Activated T-helper 1 cell treated with anti-CD3 and anti-CD28 coated beads, Interleukin-12 subunit alpha, Interleukin-12 subunit beta, Interleukin-2, Interleukin-4 antibody, amounts not matched to agents 30 ng/mL and 10 ng/mL and 1 ng/mL, durations not matched to agents 14 hours and 24 hours and 36 hours (primary cell): ENCODE measurements at regions of chr20 and their contacts with region 1.

Region 1: DNA sequence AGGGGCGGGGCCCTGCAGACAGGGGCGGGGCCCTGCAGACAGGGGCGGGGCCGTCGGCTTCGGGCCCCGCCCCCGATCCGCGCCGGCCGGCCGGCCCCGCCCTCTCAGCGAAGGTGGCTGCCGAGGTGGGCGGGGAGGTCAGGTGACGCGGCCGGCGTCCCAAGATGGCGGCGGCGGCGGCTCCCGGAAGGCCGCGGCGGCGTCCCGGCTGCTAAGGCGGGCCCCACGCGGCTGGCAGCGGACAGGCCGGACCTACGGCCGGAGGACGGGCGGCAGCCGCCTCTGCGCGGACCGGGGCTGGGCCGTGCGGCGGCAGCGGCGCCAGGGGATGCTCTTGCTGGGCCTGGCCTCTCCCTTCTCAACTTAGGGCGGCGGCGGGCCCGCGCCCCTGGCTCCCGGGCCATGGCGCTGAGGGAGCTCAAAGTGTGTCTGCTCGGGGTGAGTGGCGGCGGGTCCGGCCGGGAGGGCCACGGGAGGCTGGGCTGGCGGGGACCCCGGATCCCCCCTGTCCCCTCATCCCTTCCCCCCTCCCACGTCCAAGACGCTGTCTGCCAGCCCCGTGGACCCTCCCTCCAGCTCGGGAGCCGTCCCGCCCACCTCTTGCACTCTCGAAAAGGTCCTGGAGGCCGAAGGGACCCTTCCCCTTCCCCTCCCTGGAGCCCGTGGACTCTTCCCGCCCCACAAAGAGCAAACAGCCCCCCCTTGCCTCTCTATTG is at the start of gene RAB22A:
- DNase-seq: peak; percentile 79
- H3K4me3 Mint-ChIP-seq: peak within 1 kb of the TSS; percentile 95
- H3K27ac Mint-ChIP-seq: peak within 1 kb of the TSS; percentile 94
- H3K4me1 Mint-ChIP-seq: peaks cover 63% of the 10 kb centered on the region
- H3K27me3 Mint-ChIP-seq: no peaks in the 10 kb centered on the region
- total RNA-seq, gene RAB22A: 16.9 and 19.2 TPM in 2 replicates

Region 2: GRCh38 chr20:57391074-57391554 is 918.6 kb before region 1 on chr20 and contains the start of gene RBM38:
- intact Hi-C with region 1: loop called (anchors 2 kb)
- DNase-seq: peak; percentile 69
- H3K4me3 Mint-ChIP-seq: peak within 1 kb of the TSS; percentile 94
- H3K27ac Mint-ChIP-seq: peak within 1 kb of the TSS; percentile 94
- H3K4me1 Mint-ChIP-seq: peaks cover 31% of the 10 kb centered on the region
- H3K27me3 Mint-ChIP-seq: no peaks in the 10 kb centered on the region
- total RNA-seq, gene RBM38: 90.4 and 92.5 TPM in 2 replicates

Region 3: DNA sequence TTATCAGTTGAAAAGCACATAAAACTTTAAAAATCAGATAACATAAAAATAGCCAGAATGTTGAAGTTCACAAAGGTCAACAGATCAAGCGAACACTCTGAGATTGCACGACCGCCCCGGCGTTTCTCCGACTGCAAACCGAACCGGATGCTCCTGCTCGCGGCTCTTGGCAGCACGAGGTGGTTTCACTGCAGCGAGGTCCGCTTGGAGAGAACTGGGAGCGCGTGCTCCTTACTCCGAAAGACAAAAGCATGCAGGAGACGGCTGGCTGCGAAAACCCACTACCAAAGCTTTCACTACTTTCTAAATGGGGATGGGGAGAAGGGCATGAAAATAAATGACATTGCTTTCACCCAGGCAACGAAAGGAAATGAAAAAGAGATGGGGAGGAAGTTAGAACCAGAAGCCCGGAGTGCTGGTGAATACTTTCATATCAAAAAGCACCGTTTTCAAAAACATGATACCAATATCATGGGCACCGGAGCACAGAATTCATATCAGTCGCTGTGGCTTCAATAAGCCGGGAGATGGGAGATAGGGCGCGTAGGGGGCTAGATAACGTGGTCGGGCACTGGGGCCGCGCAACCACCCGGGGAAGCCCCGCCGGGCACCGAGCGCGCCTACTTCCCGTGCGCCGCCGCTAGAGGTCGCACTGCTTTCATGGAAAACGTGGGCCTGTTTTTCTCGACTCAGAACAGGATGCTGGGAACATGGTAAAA is 73.0 kb before region 1 on chr20:
- intact Hi-C with region 1: loop called (anchors 1 kb)
- DNase-seq: peak; percentile 79
- H3K4me3 Mint-ChIP-seq: peak overlapping the region; percentile 83
- H3K27ac Mint-ChIP-seq: peak overlapping the region; percentile 84
- H3K4me1 Mint-ChIP-seq: peaks cover 30% of the 10 kb centered on the region
- H3K27me3 Mint-ChIP-seq: no peaks in the 10 kb centered on the region

Region 4: GRCh38 chr20:58271606-58272402 is 37.9 kb before region 1 on chr20:
- intact Hi-C with region 1: loop called (anchors 1 kb)
- DNase-seq: no peak
- H3K4me3 Mint-ChIP-seq: no peak overlapping the region
- H3K27ac Mint-ChIP-seq: peak overlapping the region; percentile 70
- H3K4me1 Mint-ChIP-seq: peaks cover 50% of the 10 kb centered on the region
- H3K27me3 Mint-ChIP-seq: no peaks in the 10 kb centered on the region

Region 5: DNA sequence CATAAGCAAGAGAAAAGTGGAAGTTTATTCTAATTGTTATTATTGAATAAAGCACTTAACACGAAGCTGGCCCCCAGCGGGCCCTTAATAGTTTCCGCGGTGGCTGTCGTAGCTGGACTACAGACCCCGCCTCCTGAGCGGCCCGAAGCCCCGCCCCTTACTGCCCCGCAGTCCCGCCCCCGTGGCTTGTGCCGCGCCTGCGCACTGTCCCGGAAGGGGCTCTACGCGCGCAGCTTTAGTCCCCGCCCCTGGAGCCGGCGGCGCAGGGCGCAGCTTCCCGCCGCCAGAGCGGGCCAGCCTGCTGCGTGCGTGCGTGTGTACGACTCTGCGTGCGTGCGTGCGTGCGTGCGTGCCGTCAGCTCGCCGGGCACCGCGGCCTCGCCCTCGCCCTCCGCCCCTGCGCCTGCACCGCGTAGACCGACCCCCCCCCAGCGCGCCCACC is 79.2 kb after region 1 on chr20 and contains the start of gene VAPB:
- intact Hi-C with region 1: loop called (anchors 1 kb)
- DNase-seq: peak; percentile 97
- H3K4me3 Mint-ChIP-seq: peak within 1 kb of the TSS; percentile 99
- H3K27ac Mint-ChIP-seq: peak within 1 kb of the TSS; percentile 96
- H3K4me1 Mint-ChIP-seq: peaks cover 39% of the 10 kb centered on the region
- H3K27me3 Mint-ChIP-seq: peaks cover 10% of the 10 kb centered on the region
- total RNA-seq, gene VAPB: 39.7 and 40.9 TPM in 2 replicates

Region 6: DNA sequence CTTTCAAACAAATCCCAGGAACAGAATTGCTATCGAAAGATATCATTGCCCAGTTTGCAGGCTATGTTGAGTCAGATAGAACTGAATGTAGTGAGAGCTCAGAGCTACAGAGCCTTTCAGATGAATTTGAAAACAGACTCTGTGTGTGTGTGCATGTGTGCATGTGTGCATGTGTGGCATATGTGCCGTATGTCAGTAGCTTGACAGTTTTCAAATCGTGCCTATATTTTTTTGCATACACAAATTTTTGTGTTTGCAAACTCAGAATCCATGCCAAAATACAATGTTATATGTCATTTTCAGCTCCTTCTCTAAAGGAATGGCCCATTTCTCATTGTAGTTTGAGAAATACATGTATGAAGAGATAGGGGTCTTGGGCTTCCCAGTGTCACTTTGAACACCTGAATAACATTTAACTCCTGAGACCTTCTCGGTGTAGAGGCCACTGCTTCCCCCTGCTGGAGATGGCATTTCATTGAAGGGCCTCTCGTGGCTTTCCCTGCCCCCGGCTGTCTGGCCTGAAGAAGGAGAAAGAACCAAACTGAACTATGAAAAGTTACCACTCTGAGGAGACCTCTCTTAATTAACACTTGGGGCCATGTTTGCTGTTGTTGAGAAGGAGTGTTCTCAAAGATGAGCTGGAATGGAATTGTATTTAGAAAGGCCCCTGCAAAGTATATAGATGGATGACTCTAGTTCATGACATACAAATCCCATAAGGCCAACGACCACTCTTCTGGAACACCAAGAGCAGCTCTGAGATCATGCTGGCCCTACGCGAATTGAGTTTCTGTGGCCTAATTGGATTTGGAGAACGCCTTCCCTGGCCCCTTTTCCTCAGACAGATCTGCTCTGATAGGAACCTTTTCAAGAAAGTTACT is 138.0 kb after region 1 on chr20:
- intact Hi-C with region 1: no loop called
- DNase-seq: peak; percentile 37
- H3K4me3 Mint-ChIP-seq: no peak overlapping the region
- H3K27ac Mint-ChIP-seq: no peak overlapping the region
- H3K4me1 Mint-ChIP-seq: peaks cover 24% of the 10 kb centered on the region
- H3K27me3 Mint-ChIP-seq: no peaks in the 10 kb centered on the region

Region 7: GRCh38 chr20:58888521-58889333 is 579.0 kb after region 1 on chr20:
- intact Hi-C with region 1: loop called (anchors 5 kb)
- DNase-seq: peak; percentile 79
- H3K4me3 Mint-ChIP-seq: peak overlapping the region; percentile 81
- H3K27ac Mint-ChIP-seq: peak overlapping the region; percentile 40
- H3K4me1 Mint-ChIP-seq: peaks cover 33% of the 10 kb centered on the region
- H3K27me3 Mint-ChIP-seq: no peaks in the 10 kb centered on the region

Region 8: DNA sequence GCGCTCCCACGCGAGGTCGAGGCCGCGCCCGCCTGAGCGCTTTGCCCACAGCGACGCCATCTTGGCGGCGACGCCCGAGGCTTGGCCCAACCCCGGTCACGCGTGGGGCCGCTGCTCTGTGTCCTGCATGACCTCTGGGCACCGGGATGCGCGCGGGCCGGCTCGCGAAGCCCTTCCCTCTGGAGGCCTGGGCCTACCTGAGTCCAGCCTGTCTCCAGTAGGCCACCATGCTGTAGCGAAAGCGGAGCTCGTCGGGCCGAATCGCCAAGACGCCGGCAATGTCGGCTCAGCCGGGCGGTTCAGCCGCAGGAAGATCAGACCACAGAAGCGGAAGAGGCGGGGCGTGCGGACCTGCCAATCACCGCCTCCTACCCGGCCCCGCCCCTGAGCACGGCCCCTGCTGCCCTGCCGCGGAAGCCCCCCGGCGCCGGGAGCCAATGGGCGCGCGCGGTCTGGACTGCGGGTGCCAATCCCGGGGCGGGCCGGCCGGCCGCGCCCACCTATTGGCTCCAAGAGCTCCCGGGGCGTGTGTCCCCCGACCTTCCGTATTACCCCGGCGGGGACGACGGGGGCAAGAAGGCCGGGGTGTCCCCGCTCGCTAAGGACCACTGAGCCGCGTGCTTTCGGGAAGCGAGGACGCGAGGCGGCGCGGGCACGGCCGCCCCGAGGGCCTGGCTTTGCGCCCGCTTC is 722.4 kb after region 1 on chr20 and contains the start of gene ATP5F1E:
- intact Hi-C with region 1: loop called (anchors 2 kb)
- DNase-seq: peak; percentile 96
- H3K4me3 Mint-ChIP-seq: peak within 1 kb of the TSS; percentile 90
- H3K27ac Mint-ChIP-seq: peak within 1 kb of the TSS; percentile 94
- H3K4me1 Mint-ChIP-seq: peaks cover 60% of the 10 kb centered on the region
- H3K27me3 Mint-ChIP-seq: no peaks in the 10 kb centered on the region
- total RNA-seq, gene ATP5F1E: 81.3 and 84.6 TPM in 2 replicates